Tibial artery (tissue), 4 donors: ENCODE measurements at regions of chr10 and their contacts with region 1.

Region 1: DNA sequence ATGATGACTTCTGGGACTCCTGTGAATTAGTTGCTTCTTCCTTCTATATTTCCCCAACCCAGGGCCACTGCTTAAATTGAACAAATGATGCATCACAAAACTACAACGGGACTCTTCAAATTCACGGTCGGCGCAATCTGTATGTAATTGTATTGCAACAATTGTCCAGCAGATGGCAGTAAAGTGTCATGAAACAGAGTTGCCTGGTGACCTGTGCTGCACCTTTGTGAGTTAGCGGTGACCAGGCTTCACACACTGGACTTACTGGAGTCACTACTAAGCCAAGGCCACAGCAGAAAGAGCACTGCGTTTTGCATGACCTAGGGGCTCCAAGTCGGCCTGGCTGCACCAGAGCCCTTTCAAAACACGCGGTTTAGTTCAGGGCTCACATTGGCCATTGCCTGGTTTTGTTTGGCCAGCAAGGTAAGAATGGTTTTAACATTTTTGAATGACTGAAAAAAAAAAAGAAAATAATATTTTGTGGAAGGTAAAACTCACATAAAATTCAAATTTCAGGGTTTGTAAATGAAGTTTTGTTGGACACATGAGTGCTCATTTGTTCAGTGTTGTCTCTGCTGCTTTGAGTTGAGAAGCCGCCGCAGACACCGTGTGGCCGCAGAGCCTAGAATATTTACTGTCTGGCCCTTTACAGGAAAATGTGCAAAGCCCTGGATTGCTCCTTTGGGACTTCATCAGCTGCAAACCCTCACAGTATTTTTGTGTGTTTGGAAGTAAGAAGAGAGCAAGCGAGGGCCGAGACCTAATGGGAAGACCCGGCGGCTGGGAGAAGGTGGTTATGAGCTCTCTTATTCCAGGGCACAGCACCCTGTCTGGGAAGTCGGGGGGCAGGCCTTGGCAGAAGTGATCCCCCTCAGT is 23.2 kb upstream of the ZNF32 start:
- DNase-seq: peak in 1 of 2 donors; percentile 52
- H3K4me3 ChIP-seq: no peak overlapping the region
- H3K27ac ChIP-seq: no peak overlapping the region
- H3K4me1 ChIP-seq: peaks cover 0 to 9% (median 5%) of the 10 kb centered on the region in 4 donors
- H3K27me3 ChIP-seq: peaks cover 0 to 26% of the 10 kb centered on the region in 2 donors
- CTCF ChIP-seq: peak; percentile 76 to 95

Region 2: GRCh38 chr10:44857363-44858016 is 1185.6 kb after region 1 on chr10:
- intact Hi-C with region 1: loop called (anchors 5 kb)
- DNase-seq: peak; percentile 54 to 72
- H3K4me3 ChIP-seq: no peak overlapping the region
- H3K27ac ChIP-seq: no peak overlapping the region
- H3K4me1 ChIP-seq: peaks cover 0 to 9% (median 4%) of the 10 kb centered on the region in 4 donors
- H3K27me3 ChIP-seq: no peaks in the 10 kb centered on the region
- CTCF ChIP-seq: peak; percentile 92 to 99